ENCODE measurements at regions of chr2 and their contacts with region 1.

Region 1: DNA sequence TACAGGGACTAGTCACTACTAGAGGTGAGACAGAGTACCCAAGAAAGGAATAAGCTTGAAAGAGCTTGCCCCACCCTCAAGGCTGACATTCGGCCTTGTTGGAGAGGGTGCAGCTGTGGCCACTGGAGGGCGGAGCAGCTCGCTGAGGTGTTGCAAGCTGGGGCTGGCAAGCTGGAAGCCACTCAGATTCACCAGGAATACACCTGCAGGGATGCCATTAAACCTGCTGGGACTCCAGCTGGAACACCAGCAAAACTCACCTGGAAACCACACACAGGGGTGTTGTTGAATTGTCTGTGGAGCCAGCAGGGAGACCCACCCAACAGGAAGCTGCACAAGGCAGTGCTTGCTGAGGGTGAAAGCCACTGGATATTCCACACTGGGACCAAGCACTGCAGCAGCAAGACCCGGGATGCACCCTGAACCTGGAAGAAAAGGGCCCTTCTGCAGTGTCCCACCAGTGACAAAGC is 26.1 kb downstream of the KCTD18 start:
- DNase-seq: no peak
- ATAC-seq: peak; percentile 86
- H3K4me3 ChIP-seq: no peak overlapping the region
- H3K27ac ChIP-seq: no peak overlapping the region
- H3K4me1 ChIP-seq: no peaks in the 10 kb centered on the region
- H3K27me3 ChIP-seq: no peaks in the 10 kb centered on the region
- CTCF ChIP-seq: peak; percentile 69 to 80 (median 78)
- EP300 ChIP-seq: no peak
- POLR2A ChIP-seq: no peak
- RAD21 ChIP-seq: peak; percentile 65

Region 2: DNA sequence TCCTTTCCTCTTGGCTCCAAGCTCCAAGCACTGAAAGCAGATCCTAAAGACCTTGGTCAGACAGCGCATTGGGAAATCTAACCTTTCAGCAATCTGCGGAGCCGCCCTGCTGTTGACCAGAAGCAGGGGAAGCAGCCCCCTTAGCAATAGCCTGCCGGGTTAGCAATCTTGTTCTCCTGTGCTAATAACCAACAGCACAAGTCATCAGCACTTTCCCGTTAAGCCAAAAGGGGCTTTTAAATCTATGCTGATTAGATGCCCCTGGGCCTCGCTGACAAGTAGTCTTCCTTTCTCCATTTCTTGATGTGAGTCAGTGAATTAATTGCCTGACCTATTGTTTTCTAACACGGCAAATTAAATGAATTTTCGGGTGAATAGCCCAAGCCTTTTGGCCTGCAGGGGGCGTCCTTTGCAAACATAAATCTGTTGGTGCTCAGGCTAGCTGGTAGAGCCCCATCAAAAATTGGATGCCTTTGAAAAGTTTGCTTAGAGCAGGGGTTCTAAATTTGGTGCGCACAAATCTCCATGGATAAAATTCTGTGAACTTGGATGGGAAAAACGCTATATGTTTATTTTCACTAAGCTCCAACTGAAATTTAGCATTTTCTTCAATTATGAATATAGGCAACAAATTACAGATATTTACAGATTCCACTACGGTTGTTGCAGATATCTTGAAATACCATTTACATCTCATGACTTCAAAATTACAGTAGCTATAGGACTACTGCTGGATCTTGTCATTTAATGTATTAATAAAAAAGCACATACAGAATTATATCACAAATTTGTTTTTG is 503.7 kb before region 1 on chr2:
- CTCF ChIA-PET with region 1: interaction called, 104 read pairs
- POLR2A ChIA-PET with region 1: no interaction called
- RAD21 ChIA-PET with region 1: interaction called, 68 read pairs
- SMC1A ChIA-PET with region 1: interaction called, 53 read pairs
- in situ Hi-C with region 1: no loop called
- intact Hi-C with region 1: loop called (anchors 1 kb)
- DNase-seq: no peak
- ATAC-seq: peak; percentile 74
- H3K4me3 ChIP-seq: no peak overlapping the region
- H3K27ac ChIP-seq: no peak overlapping the region
- H3K4me1 ChIP-seq: 0 out of 2 replicates have a peak, but pooled peaks cover 5% of the 10 kb centered on the region
- H3K27me3 ChIP-seq: no peaks in the 10 kb centered on the region
- CTCF ChIP-seq: peak; percentile 68 to 87 (median 83)
- EP300 ChIP-seq: no peak
- POLR2A ChIP-seq: no peak
- RAD21 ChIP-seq: peak; percentile 88

Region 3: GRCh38 chr2:200454927-200455801 is 28.6 kb before region 1 on chr2:
- CTCF ChIA-PET with region 1: interaction called, 68 read pairs
- POLR2A ChIA-PET with region 1: no interaction called
- RAD21 ChIA-PET with region 1: interaction called, 31 read pairs
- SMC1A ChIA-PET with region 1: interaction called, 5 read pairs
- in situ Hi-C with region 1: no loop called
- intact Hi-C with region 1: no loop called
- DNase-seq: peak; percentile 66
- ATAC-seq: peak; percentile 77
- H3K4me3 ChIP-seq: no peak overlapping the region
- H3K27ac ChIP-seq: peak overlapping the region; percentile 30; the same call in 1 of the 2 replicates
- H3K4me1 ChIP-seq: peaks cover 17% of the 10 kb centered on the region
- H3K27me3 ChIP-seq: no peaks in the 10 kb centered on the region
- CTCF ChIP-seq: no peak
- EP300 ChIP-seq: peak; percentile 82 to 86; a peak in 3 of 4 replicates
- POLR2A ChIP-seq: no peak
- RAD21 ChIP-seq: no peak

Region 4: DNA sequence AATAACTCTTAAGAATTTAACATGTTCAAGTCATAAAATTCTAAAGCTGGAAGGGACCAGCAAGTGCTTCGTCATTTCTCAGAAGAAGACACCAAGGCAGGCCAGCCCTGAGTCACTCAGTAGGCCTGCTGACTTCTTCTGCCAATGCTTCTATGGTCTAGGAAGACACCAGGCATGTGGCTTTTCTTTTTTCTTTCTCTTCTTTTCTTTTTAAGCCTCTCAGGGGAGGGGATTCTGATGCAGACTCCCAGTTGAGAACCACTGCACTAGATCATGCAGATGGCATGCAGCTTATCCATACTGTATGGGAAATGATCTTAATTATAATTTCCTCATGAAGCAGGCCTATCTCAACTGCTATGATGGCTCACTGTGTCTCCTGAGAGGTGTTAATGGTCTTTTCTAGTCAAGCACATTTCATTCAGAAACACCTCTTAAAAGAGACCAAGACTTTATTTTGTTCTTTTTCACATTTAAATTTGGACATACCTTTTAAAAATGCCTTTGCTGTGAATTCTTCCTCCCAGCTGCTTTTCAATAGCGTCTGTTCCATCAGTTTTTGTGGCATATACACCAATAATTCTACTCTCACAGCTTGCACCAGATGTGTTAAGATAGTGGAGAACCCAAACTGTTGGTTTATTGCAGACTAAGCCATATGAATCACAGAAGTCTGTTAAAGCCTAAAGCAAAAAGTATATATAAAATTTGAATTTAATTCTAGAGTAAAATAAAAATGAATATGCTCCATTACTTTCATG is 14.8 kb after region 1 on chr2:
- CTCF ChIA-PET with region 1: interaction called, 32 read pairs
- POLR2A ChIA-PET with region 1: interaction called, 3 read pairs
- RAD21 ChIA-PET with region 1: interaction called, 4 read pairs
- SMC1A ChIA-PET with region 1: interaction called, 23 read pairs
- in situ Hi-C with region 1: no loop called
- intact Hi-C with region 1: no loop called
- DNase-seq: no peak
- ATAC-seq: no peak
- H3K4me3 ChIP-seq: no peak overlapping the region
- H3K27ac ChIP-seq: no peak overlapping the region
- H3K4me1 ChIP-seq: no peaks in the 10 kb centered on the region
- H3K27me3 ChIP-seq: no peaks in the 10 kb centered on the region
- CTCF ChIP-seq: no peak
- EP300 ChIP-seq: no peak
- POLR2A ChIP-seq: no peak
- RAD21 ChIP-seq: no peak

Region 5: GRCh38 chr2:200533754-200534153 is 50.0 kb after region 1 on chr2:
- CTCF ChIA-PET with region 1: interaction called, 12 read pairs
- POLR2A ChIA-PET with region 1: no interaction called
- RAD21 ChIA-PET with region 1: no interaction called
- SMC1A ChIA-PET with region 1: interaction called, 8 read pairs
- in situ Hi-C with region 1: no loop called
- intact Hi-C with region 1: no loop called
- DNase-seq: no peak
- ATAC-seq: no peak
- H3K4me3 ChIP-seq: no peak overlapping the region
- H3K27ac ChIP-seq: no peak overlapping the region
- H3K4me1 ChIP-seq: no peaks in the 10 kb centered on the region
- H3K27me3 ChIP-seq: no peaks in the 10 kb centered on the region
- CTCF ChIP-seq: no peak
- EP300 ChIP-seq: no peak
- POLR2A ChIP-seq: no peak
- RAD21 ChIP-seq: no peak

Region 6: DNA sequence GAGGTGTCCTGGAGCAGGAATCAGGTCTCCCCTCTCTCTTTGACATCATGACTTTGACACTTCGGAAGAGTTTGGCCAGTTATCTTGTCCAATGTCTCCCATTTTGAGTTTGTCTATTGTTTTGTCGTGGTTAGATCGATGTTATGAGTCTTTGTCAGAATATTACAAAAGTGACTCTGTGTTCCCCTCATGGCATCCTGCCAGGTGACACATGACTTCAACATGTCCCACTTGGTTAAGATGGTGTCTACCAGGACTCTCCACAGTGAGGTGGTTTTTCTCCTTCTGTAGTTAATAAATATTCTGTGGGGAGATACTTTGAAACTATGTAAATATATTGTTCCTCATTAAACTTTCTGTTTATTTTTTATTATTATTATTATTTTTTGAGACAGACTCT is 251.3 kb after region 1 on chr2:
- CTCF ChIA-PET with region 1: interaction called, 25 read pairs
- POLR2A ChIA-PET with region 1: no interaction called
- RAD21 ChIA-PET with region 1: interaction called, 13 read pairs
- SMC1A ChIA-PET with region 1: interaction called, 10 read pairs
- in situ Hi-C with region 1: no loop called
- intact Hi-C with region 1: no loop called
- DNase-seq: no peak
- ATAC-seq: no peak
- H3K4me3 ChIP-seq: no peak overlapping the region
- H3K27ac ChIP-seq: no peak overlapping the region
- H3K4me1 ChIP-seq: no peaks in the 10 kb centered on the region
- H3K27me3 ChIP-seq: peaks cover 0 to 3% of the 10 kb centered on the region in 2 experiments; a peak in 2 of 4 replicates
- CTCF ChIP-seq: no peak
- EP300 ChIP-seq: no peak
- POLR2A ChIP-seq: no peak
- RAD21 ChIP-seq: no peak

Region 7: GRCh38 chr2:200843993-200844948 is 360.5 kb after region 1 on chr2:
- CTCF ChIA-PET with region 1: no interaction called
- POLR2A ChIA-PET with region 1: no interaction called
- RAD21 ChIA-PET with region 1: no interaction called
- SMC1A ChIA-PET with region 1: no interaction called
- in situ Hi-C with region 1: no loop called
- intact Hi-C with region 1: no loop called
- DNase-seq: no peak
- ATAC-seq: no peak
- H3K4me3 ChIP-seq: no peak overlapping the region
- H3K27ac ChIP-seq: no peak overlapping the region
- H3K4me1 ChIP-seq: no peaks in the 10 kb centered on the region
- H3K27me3 ChIP-seq: no peaks in the 10 kb centered on the region
- CTCF ChIP-seq: no peak
- EP300 ChIP-seq: no peak
- POLR2A ChIP-seq: no peak
- RAD21 ChIP-seq: no peak

Measured in GM12878 (cell line).